K562 (cell line): ENCODE measurements at regions of chr2 and their contacts with region 1.

Region 1: GRCh38 chr2:67840460-67841068 is 222.2 kb downstream of the C1D start:
- DNase-seq: peak; percentile 31 to 50 (median 34)
- ATAC-seq: peak; percentile 93
- H3K4me3 ChIP-seq: no peak overlapping the region
- H3K27ac ChIP-seq: no peak overlapping the region
- H3K4me1 ChIP-seq: no peaks in the 10 kb centered on the region
- H3K27me3 ChIP-seq: no peaks in the 10 kb centered on the region; a peak in 1 of 5 replicates
- CTCF ChIP-seq: peak; percentile 61 to 78 (median 73)
- EP300 ChIP-seq: no peak
- POLR2A ChIP-seq: no peak
- RAD21 ChIP-seq: peak; percentile 50 to 83

Region 2: GRCh38 chr2:66587216-66587615 is 1253.3 kb before region 1 on chr2:
- CTCF ChIA-PET with region 1: no interaction called
- POLR2A ChIA-PET with region 1: no interaction called
- in situ Hi-C with region 1: no loop called
- intact Hi-C with region 1: loop called (anchors 10 kb)
- DNase-seq: peak in 2 of 4 experiments; percentile 18 to 40
- ATAC-seq: peak; percentile 77
- H3K4me3 ChIP-seq: no peak overlapping the region
- H3K27ac ChIP-seq: no peak overlapping the region
- H3K4me1 ChIP-seq: no peaks in the 10 kb centered on the region
- H3K27me3 ChIP-seq: peaks cover 12% of the 10 kb centered on the region in 2 experiments; a peak in 4 of 5 replicates
- CTCF ChIP-seq: peak; percentile 37 to 40 (median 40); a peak in 4 of 6 replicates
- EP300 ChIP-seq: no peak
- POLR2A ChIP-seq: no peak
- RAD21 ChIP-seq: peak in 1 of 2 experiments; percentile 48; a peak in 3 of 4 replicates

Region 3: DNA sequence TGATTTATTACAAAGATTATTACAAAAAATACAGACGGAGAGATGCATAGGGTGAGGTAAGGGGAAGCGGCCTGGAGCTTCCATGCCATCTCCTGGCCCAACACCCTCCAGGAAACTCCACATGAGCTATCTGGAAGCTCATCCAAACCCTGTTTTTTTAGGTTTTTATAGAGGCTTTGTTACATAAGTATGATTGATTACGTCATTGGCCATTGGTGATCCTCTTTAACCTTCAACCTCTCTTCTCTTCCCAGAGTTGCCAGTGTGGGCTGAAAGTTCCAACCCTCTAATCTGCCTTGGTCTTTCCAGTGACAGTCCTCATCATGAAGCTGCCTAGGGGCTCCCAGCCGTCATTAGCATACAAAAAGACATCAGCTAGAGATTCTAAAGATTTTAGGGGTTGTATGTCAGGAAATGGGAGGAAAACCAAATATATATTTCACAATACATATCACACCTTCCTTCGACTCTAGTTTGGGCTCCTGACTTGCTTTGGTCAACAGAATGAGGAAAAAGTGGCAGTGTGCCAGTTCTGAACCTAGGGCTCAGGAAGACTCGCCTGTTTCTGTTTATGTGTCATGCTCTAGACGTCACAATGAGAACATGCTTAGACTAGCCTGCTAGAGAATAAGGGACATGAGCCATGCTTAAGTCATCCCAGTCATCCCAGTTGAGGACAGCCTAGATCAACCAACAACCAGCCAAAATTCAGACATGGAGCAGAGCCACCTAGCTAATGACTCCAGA is 389.3 kb before region 1 on chr2:
- CTCF ChIA-PET with region 1: interaction called, 5 read pairs
- POLR2A ChIA-PET with region 1: no interaction called
- in situ Hi-C with region 1: no loop called
- intact Hi-C with region 1: loop called (anchors 10 kb)
- DNase-seq: no peak
- ATAC-seq: no peak
- H3K4me3 ChIP-seq: no peak overlapping the region
- H3K27ac ChIP-seq: no peak overlapping the region
- H3K4me1 ChIP-seq: no peaks in the 10 kb centered on the region
- H3K27me3 ChIP-seq: no peaks in the 10 kb centered on the region
- CTCF ChIP-seq: no peak
- EP300 ChIP-seq: no peak
- POLR2A ChIP-seq: no peak
- RAD21 ChIP-seq: no peak

Region 4: GRCh38 chr2:67782443-67782842 is 58.1 kb before region 1 on chr2:
- CTCF ChIA-PET with region 1: no interaction called
- POLR2A ChIA-PET with region 1: no interaction called
- in situ Hi-C with region 1: no loop called
- intact Hi-C with region 1: no loop called
- DNase-seq: no peak
- ATAC-seq: no peak
- H3K4me3 ChIP-seq: no peak overlapping the region
- H3K27ac ChIP-seq: no peak overlapping the region
- H3K4me1 ChIP-seq: no peaks in the 10 kb centered on the region
- H3K27me3 ChIP-seq: no peaks in the 10 kb centered on the region; a peak in 1 of 5 replicates
- CTCF ChIP-seq: no peak
- EP300 ChIP-seq: no peak
- POLR2A ChIP-seq: no peak
- RAD21 ChIP-seq: no peak

Region 5: DNA sequence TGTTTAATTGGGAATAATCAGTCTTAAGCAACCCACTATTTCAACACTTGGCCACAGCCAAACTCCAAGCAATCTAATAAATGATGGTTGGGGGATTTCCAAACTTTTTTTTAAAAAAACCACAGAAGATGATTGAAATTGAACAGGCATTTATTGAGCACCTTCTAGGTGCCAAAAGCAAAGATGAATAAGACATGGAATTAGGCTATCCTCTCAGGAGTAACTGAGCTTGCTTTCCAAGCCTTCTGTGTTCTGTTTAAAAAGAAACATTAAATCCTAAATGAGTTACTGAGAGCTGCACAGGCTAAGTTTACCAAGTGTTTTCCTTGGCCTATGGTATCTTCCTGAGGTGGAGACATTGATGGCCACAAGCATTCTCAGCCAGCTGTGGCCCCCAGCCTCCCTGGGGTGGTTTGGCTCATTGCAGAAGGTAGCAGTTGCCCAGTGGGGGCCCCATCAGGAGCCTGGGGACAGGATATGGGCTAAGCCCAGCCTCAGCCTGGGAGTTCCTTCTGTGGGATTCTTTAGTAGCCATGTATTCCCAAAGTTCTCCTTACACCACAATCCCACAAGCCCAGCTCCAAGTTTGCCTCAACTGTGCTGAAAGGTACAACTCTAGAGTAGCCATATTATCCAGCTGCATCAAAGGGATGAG is 47.9 kb after region 1 on chr2:
- CTCF ChIA-PET with region 1: no interaction called
- POLR2A ChIA-PET with region 1: no interaction called
- in situ Hi-C with region 1: no loop called
- intact Hi-C with region 1: loop called (anchors 5 kb)
- DNase-seq: no peak
- ATAC-seq: no peak
- H3K4me3 ChIP-seq: no peak overlapping the region
- H3K27ac ChIP-seq: no peak overlapping the region
- H3K4me1 ChIP-seq: no peaks in the 10 kb centered on the region
- H3K27me3 ChIP-seq: no peaks in the 10 kb centered on the region; a peak in 1 of 5 replicates
- CTCF ChIP-seq: no peak
- EP300 ChIP-seq: no peak
- POLR2A ChIP-seq: no peak
- RAD21 ChIP-seq: no peak

Region 6: DNA sequence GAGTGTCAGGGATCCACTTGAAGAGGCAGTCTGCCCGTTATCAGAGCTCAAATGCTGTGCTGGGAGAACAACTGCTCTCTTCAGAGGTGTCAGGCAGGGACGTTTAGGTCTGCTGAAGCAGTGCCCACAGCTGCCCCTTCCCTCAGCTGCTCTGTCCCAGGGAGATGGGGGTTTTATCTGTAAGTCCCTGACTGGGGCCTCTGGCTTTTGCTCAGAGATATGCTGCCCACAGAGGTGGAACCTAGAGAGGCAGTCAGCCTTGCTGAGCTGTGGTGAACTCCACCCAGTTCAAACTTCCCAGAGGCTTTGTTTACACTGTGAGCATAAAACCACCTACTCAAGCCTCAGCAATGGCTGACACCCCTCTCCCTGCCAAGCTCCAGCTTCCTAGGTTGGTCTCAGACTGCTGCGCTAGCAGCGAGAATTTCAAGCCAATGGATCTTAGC is 562.7 kb after region 1 on chr2:
- CTCF ChIA-PET with region 1: no interaction called
- POLR2A ChIA-PET with region 1: no interaction called
- in situ Hi-C with region 1: no loop called
- intact Hi-C with region 1: no loop called
- DNase-seq: peak in 2 of 4 experiments; percentile 49 to 88
- ATAC-seq: peak; percentile 93
- H3K4me3 ChIP-seq: no peak overlapping the region
- H3K27ac ChIP-seq: peak overlapping the region; percentile 62; the same call in 2 of the 3 replicates
- H3K4me1 ChIP-seq: peaks cover 12 to 22% of the 10 kb centered on the region in 2 experiments
- H3K27me3 ChIP-seq: no peaks in the 10 kb centered on the region
- CTCF ChIP-seq: no peak
- EP300 ChIP-seq: peak; percentile 5; the same call in 1 of the 2 replicates
- POLR2A ChIP-seq: no peak
- RAD21 ChIP-seq: peak; percentile 7 to 38; a peak in 1 of 4 replicates